GM12878 (cell line): ENCODE measurements at regions of chr6 and their contacts with region 1.

Region 1: DNA sequence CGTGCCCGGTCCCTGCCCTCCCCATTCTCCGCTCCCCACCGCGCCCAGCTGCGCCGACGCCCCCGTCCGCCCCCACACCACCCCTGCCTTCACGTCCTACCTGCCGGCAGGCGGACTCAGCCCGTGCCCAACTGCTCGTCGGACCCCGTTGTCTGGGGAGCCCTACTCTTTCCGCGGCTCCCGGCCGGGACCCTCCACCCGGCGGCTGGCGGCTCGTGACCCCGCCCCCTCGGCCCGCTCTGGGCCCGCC is at the start of gene SERAC1:
- DNase-seq: no peak
- ATAC-seq: peak; percentile 85
- H3K4me3 ChIP-seq: peak within 1 kb of the TSS; percentile 83
- H3K27ac ChIP-seq: peak within 1 kb of the TSS; percentile 78
- H3K4me1 ChIP-seq: no peaks in the 10 kb centered on the region
- H3K27me3 ChIP-seq: no peaks in the 10 kb centered on the region
- CTCF ChIP-seq: no peak
- EP300 ChIP-seq: no peak
- POLR2A ChIP-seq: no peak
- RAD21 ChIP-seq: no peak
- polyA plus RNA-seq, gene SERAC1: 0.76 to 0.88 TPM

Region 2: GRCh38 chr6:158185729-158186456 is 17.9 kb after region 1 on chr6:
- CTCF ChIA-PET with region 1: no interaction called
- POLR2A ChIA-PET with region 1: no interaction called
- RAD21 ChIA-PET with region 1: no interaction called
- SMC1A ChIA-PET with region 1: no interaction called
- in situ Hi-C with region 1: no loop called
- intact Hi-C with region 1: no loop called
- DNase-seq: no peak
- ATAC-seq: no peak
- H3K4me3 ChIP-seq: no peak overlapping the region
- H3K27ac ChIP-seq: no peak overlapping the region
- H3K4me1 ChIP-seq: no peaks in the 10 kb centered on the region
- H3K27me3 ChIP-seq: no peaks in the 10 kb centered on the region
- CTCF ChIP-seq: no peak
- EP300 ChIP-seq: no peak
- POLR2A ChIP-seq: no peak
- RAD21 ChIP-seq: no peak

Region 3: GRCh38 chr6:158207422-158207788 is 39.4 kb after region 1 on chr6:
- CTCF ChIA-PET with region 1: no interaction called
- POLR2A ChIA-PET with region 1: no interaction called
- RAD21 ChIA-PET with region 1: no interaction called
- SMC1A ChIA-PET with region 1: no interaction called
- in situ Hi-C with region 1: no loop called
- intact Hi-C with region 1: loop called (anchors 1 kb)
- DNase-seq: peak; percentile 82
- ATAC-seq: peak; percentile 98
- H3K4me3 ChIP-seq: no peak overlapping the region
- H3K27ac ChIP-seq: no peak overlapping the region
- H3K4me1 ChIP-seq: peaks cover 9% of the 10 kb centered on the region
- H3K27me3 ChIP-seq: peaks cover 0 to 3% of the 10 kb centered on the region in 2 experiments; a peak in 1 of 4 replicates
- CTCF ChIP-seq: no peak
- EP300 ChIP-seq: peak; percentile 53 to 71; a peak in 2 of 4 replicates
- POLR2A ChIP-seq: no peak
- RAD21 ChIP-seq: no peak